ENCODE measurements at regions of chr15 and their contacts with region 1.

Region 1: GRCh38 chr15:39874890-39875549 is 45.0 kb downstream of the GPR176 start:
- H3K4me3 Mint-ChIP-seq: no peak overlapping the region
- H3K27ac Mint-ChIP-seq: no peak overlapping the region
- H3K4me1 Mint-ChIP-seq: no peaks in the 10 kb centered on the region
- H3K27me3 Mint-ChIP-seq: no peaks in the 10 kb centered on the region

Region 2: GRCh38 chr15:39686000-39686613 is 188.9 kb before region 1 on chr15:
- intact Hi-C with region 1: loop called (anchors 2 kb)
- H3K4me3 Mint-ChIP-seq: no peak overlapping the region
- H3K27ac Mint-ChIP-seq: no peak overlapping the region
- H3K4me1 Mint-ChIP-seq: no peaks in the 10 kb centered on the region
- H3K27me3 Mint-ChIP-seq: no peaks in the 10 kb centered on the region

Region 3: GRCh38 chr15:39788108-39788507 is 86.9 kb before region 1 on chr15:
- intact Hi-C with region 1: loop called (anchors 2 kb)
- H3K4me3 Mint-ChIP-seq: no peak overlapping the region
- H3K27ac Mint-ChIP-seq: no peak overlapping the region
- H3K4me1 Mint-ChIP-seq: peaks cover 16% of the 10 kb centered on the region
- H3K27me3 Mint-ChIP-seq: peaks cover 3% of the 10 kb centered on the region

Region 4: GRCh38 chr15:39896846-39897245 is 21.8 kb after region 1 on chr15:
- intact Hi-C with region 1: no loop called
- H3K4me3 Mint-ChIP-seq: no peak overlapping the region
- H3K27ac Mint-ChIP-seq: no peak overlapping the region
- H3K4me1 Mint-ChIP-seq: peaks cover 7% of the 10 kb centered on the region
- H3K27me3 Mint-ChIP-seq: peaks cover 5% of the 10 kb centered on the region

Region 5: GRCh38 chr15:40029979-40030893 is 155.2 kb after region 1 on chr15:
- intact Hi-C with region 1: no loop called
- H3K4me3 Mint-ChIP-seq: no peak overlapping the region
- H3K27ac Mint-ChIP-seq: no peak overlapping the region
- H3K4me1 Mint-ChIP-seq: no peaks in the 10 kb centered on the region
- H3K27me3 Mint-ChIP-seq: no peaks in the 10 kb centered on the region